Right ventricle myocardium superior (tissue), 1 donor: ENCODE measurements at regions of chr5 and their contacts with region 1.

Region 1: GRCh38 chr5:113513384-113514288 is at the start of gene YTHDC2:
- DNase-seq: peak; percentile 94
- ATAC-seq: peak; percentile 99
- total RNA-seq, gene YTHDC2: 12.9 TPM

Region 2: DNA sequence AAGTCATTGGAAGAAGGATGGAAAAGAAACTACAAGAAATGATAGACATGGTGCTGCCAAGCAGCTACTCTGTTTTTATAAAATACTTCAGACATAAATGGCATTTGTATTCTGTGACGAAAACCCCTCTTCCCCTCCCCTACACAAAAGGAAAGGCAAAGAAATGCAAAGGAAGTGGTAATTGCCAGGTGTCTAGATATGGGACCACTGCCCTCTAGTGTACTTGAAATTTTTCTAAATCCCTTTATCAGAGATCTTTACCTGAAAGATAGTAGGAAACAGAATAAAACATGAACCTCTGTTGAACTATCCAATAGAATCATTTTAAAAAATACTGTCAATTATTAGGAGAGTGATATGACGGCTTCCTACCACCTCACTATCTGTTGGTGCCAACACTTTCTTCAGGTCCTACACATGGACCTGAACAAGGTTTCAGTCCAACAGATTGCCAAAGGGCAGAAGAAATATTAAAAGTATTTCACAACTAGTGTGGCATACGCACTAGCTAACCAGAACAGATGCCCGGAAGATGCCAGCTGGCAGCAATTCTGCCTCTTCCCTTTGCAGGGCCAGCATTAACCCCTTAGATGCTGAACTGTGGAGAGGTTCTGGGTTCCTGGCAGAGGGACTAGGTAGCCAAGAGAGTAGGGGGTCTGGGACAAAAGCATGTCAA is 183.0 kb before region 1 on chr5:
- intact Hi-C with region 1: loop called (anchors 10 kb)
- DNase-seq: peak; percentile 73
- ATAC-seq: peak; percentile 82

Region 3: DNA sequence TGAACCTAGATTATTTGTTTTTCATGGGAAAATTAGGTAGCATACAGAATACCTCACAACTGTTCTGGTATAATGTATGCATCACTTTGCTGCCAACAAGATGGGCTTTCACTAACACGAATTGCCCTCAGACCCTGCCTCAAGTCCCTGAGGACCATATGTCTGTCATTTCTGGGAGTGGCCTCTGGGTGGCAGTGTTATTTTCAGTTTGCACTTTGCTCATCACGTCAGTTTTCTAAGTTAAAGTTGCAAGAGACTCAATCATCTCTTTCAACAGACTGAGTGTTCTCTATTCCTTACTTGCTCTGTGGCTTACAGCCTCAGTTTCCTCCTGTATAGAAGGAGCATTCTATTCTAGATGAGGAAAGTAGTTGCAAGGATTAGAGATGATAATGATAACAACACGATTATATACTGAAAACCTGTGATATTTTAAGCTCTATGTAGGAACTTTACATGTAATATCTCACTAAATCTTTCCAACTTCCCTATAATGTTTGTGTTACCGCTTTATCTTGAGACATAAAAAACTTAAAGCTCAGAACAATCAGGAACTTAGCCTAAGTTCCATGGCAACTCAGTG is 134.6 kb before region 1 on chr5:
- intact Hi-C with region 1: loop called (anchors 5 kb)
- DNase-seq: no peak
- ATAC-seq: peak; percentile 62